Activated naive CD4-positive, alpha-beta T cell treated with anti-CD3 and anti-CD28 coated beads for 36 hours (primary cell): ENCODE measurements at regions of chr14 and their contacts with region 1.

Region 1: DNA sequence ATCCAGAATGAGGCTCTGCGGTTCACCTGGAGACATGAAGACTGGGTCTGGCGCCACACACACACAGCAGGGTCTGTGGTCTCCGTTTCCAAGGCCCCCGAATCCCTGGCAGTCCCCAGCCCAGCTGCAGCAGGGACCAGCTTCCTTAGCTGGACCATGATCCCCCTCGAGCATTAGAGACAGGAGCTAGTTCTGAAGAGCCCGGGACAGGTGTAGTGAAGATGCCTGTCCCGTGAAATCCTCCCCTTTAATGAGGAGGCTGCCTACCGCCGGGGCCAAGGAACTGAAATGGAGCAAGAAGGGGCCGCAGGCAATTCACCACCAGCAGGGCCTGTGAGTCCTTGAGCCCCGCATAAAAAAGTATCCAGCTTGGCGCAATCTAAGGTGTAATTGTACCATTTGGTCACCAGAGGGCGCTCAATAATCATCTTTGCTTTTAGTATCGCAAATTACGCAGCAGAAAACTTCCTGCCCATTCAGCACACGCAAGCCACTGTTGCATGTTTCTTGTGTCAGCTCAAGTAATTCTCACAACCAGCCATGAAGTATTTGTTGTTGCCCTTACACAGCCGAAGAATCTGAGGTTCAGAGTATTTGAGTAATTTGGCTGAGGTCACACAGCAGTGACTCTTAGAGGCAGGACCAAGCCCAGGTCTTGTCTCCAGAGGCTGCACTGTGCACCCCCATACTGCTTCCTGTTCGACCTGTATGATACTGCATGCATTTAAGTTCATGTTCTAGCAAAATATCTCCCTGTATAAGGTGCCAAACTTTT is 54.3 kb upstream of the PPP2R5C start:
- DNase-seq: peak; percentile 76
- H3K4me3 Mint-ChIP-seq: peak overlapping the region; percentile 49
- H3K27ac Mint-ChIP-seq: peak overlapping the region; percentile 78
- H3K4me1 Mint-ChIP-seq: peaks cover 27% of the 10 kb centered on the region
- H3K27me3 Mint-ChIP-seq: no peaks in the 10 kb centered on the region

Region 2: GRCh38 chr14:101371799-101372793 is 335.2 kb before region 1 on chr14:
- CTCF ChIA-PET with region 1: no interaction called
- intact Hi-C with region 1: no loop called
- DNase-seq: no peak
- H3K4me3 Mint-ChIP-seq: no peak overlapping the region
- H3K27ac Mint-ChIP-seq: no peak overlapping the region
- H3K4me1 Mint-ChIP-seq: no peaks in the 10 kb centered on the region
- H3K27me3 Mint-ChIP-seq: peaks cover 21% of the 10 kb centered on the region

Region 3: DNA sequence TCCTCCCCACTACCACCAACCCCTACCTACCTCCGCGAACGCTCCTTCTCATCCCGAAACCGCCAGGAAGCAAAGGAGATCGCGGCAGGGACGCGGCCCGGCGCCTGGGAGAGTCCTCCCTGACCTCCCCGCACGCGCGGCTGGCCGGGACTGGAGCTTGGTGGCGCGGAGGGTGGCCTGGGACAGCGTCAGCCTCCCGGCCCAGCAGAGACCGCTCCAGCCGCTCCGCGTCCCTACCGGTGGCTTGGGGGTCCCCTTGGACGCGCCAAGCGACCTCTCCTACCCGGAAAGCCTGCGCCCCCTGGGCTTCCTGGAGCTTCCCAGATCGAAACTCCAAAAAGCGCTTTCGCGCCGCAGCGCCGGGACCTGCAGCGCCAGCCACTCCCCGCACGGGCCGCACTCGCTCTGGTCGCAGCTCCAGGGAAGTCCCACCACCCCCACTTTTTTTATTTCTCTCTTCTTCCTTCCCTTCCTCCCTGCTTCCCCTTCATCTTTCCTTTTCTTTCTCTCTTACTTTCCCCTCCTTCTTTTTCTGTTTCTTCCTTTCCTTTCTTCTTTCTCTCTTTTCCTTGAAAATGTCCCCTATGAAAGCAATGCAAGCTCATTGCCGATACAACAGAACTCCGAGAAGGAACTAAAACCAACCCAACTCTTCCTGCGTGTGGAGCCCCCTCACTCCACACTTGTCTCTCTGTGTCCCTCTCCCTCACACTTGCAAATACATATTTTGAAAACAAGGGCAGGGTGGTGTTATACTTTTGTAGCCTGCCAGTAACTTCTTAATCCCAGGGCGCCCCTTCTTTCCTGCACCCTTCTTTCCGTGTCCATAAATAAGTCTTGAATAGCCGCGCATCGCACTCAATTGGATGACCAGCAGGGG is 142.2 kb before region 1 on chr14:
- CTCF ChIA-PET with region 1: no interaction called
- intact Hi-C with region 1: no loop called
- DNase-seq: no peak
- H3K4me3 Mint-ChIP-seq: no peak overlapping the region
- H3K27ac Mint-ChIP-seq: no peak overlapping the region
- H3K4me1 Mint-ChIP-seq: peaks cover 12% of the 10 kb centered on the region
- H3K27me3 Mint-ChIP-seq: peaks cover 61% of the 10 kb centered on the region

Region 4: DNA sequence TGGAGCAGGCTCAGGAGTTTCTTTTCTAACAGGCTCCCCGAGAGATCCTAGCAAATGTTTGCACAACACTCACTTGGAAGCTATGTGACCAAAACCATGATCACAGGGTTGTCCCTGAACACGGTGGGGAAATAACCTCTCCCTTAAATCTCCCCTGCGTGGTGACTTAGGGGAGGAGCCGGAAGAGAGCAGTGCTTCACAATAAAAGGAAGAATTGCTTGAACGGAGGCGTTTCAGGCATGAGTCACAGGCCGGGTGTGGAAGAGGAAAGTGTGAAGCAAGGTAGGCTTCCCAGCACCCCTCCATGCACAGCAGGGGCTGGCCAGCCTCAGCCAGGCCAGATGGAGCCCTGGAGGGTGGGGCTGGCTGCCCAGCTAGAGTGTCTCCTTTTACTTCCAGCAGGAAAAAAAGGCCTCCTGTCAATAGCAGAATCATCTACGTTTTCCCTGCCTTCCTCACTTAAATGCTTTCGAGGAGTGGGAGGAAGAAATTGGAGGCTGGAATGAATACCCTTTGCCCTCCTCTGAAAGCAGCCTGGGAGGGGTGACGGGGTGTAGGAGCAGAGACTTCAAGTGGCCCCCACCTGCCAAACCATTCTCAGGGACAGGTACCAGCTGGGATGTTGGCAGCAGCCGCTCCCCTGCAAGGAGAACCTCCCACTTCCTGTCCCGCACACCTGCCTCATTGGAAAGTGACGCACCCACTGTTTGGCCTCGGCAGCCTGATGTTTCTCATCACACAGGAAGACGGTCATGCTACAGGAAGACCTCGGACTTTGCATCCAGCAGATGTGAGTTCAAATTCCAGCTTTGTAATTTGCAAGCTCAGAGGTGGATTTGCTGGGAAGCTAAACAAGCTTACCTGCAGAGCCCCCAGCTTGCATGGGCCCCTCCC is 24.2 kb after region 1 on chr14:
- CTCF ChIA-PET with region 1: interaction called, 25 read pairs
- intact Hi-C with region 1: loop called (anchors 1 kb)
- DNase-seq: peak; percentile 96
- H3K4me3 Mint-ChIP-seq: peak overlapping the region; percentile 71
- H3K27ac Mint-ChIP-seq: peak overlapping the region; percentile 98
- H3K4me1 Mint-ChIP-seq: peaks cover 53% of the 10 kb centered on the region
- H3K27me3 Mint-ChIP-seq: no peaks in the 10 kb centered on the region

Region 5: GRCh38 chr14:101743701-101744100 is 36.4 kb after region 1 on chr14:
- CTCF ChIA-PET with region 1: no interaction called
- intact Hi-C with region 1: no loop called
- DNase-seq: no peak
- H3K4me3 Mint-ChIP-seq: no peak overlapping the region
- H3K27ac Mint-ChIP-seq: no peak overlapping the region
- H3K4me1 Mint-ChIP-seq: no peaks in the 10 kb centered on the region
- H3K27me3 Mint-ChIP-seq: no peaks in the 10 kb centered on the region

Region 6: GRCh38 chr14:101809671-101810514 is 102.6 kb after region 1 on chr14:
- CTCF ChIA-PET with region 1: interaction called, 8 read pairs
- intact Hi-C with region 1: loop called (anchors 1 kb)
- DNase-seq: peak; percentile 94
- H3K4me3 Mint-ChIP-seq: peak overlapping the region; percentile 83
- H3K27ac Mint-ChIP-seq: peak overlapping the region; percentile 95
- H3K4me1 Mint-ChIP-seq: peaks cover 42% of the 10 kb centered on the region
- H3K27me3 Mint-ChIP-seq: no peaks in the 10 kb centered on the region

Region 7: GRCh38 chr14:101876555-101876938 is 169.3 kb after region 1 on chr14:
- CTCF ChIA-PET with region 1: interaction called, 5 read pairs
- intact Hi-C with region 1: loop called (anchors 1 kb)
- DNase-seq: peak; percentile 94
- H3K4me3 Mint-ChIP-seq: peak overlapping the region; percentile 52
- H3K27ac Mint-ChIP-seq: peak overlapping the region; percentile 85
- H3K4me1 Mint-ChIP-seq: peaks cover 89% of the 10 kb centered on the region
- H3K27me3 Mint-ChIP-seq: no peaks in the 10 kb centered on the region

Region 8: DNA sequence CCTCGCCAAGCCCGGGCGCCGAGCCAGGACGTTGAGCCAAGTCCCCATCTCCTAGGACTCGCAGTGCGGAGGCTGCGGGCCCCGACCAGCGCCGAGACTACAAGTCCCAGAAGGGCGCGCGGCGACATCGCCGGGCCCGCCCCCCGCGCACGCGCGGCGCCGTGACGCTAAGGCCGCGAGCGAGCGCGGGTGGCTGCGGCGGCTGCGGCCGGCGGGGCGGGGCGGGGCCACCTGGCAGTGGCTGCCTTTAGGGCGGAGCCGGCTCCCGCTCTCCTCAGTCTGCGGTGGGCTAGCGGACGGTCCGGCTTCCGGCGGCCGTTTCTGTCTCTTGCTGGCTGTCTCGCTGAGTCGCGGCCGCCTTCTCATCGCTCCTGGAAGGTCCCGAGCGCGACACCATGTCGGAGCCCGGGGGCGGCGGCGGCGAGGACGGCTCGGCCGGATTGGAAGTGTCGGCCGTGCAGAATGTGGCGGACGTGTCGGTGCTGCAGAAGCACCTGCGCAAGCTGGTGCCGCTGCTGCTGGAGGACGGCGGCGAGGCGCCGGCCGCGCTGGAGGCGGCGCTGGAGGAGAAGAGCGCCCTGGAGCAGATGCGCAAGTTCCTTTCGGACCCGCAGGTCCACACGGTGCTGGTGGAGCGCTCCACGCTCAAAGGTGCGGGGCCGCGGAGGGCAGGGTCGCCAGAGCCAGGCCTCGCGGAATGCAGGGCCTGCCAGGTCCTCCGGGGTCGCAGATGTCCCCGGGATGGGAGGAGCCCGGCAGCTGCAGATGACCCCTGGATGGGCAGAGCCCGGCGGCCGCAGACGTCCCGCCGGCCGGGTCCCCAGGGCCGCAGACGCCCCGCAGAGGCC is 257.3 kb after region 1 on chr14 and contains the start of gene DYNC1H1:
- CTCF ChIA-PET with region 1: interaction called, 7 read pairs
- intact Hi-C with region 1: loop called (anchors 1 kb)
- DNase-seq: peak; percentile 86
- H3K4me3 Mint-ChIP-seq: peak within 1 kb of the TSS; percentile 89
- H3K27ac Mint-ChIP-seq: peak within 1 kb of the TSS; percentile 71
- H3K4me1 Mint-ChIP-seq: peaks cover 39% of the 10 kb centered on the region
- H3K27me3 Mint-ChIP-seq: no peaks in the 10 kb centered on the region
- total RNA-seq, gene DYNC1H1: 207 to 208 TPM

Region 9: GRCh38 chr14:102086972-102087761 is 379.9 kb after region 1 on chr14 and contains the start of gene HSP90AA1:
- CTCF ChIA-PET with region 1: no interaction called
- intact Hi-C with region 1: loop called (anchors 2 kb)
- DNase-seq: peak; percentile 92
- H3K4me3 Mint-ChIP-seq: peak within 1 kb of the TSS; percentile 97
- H3K27ac Mint-ChIP-seq: peak within 1 kb of the TSS; percentile 95
- H3K4me1 Mint-ChIP-seq: peaks cover 49% of the 10 kb centered on the region
- H3K27me3 Mint-ChIP-seq: no peaks in the 10 kb centered on the region
- total RNA-seq, gene HSP90AA1: 1,286 to 1,366 TPM

Region 10: DNA sequence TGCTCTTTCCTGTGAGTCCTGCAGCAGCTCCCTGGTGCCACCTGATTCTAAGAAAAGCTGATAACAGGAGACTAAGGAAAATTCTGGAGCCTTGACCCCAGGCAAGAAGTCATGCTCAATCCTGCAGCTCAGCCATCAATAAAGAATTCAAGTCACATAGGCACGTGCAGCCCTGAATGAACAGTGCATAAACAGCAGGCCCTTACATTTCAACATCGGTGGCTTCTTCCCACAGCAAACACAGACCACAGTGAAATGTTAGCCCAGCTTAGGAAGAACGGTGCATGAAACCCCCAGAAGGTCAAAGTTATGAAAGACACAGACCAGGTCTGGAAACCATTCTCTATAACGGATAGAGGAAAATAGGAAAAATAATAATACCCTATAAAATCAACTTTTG is 645.0 kb after region 1 on chr14:
- CTCF ChIA-PET with region 1: no interaction called
- intact Hi-C with region 1: no loop called
- DNase-seq: no peak
- H3K4me3 Mint-ChIP-seq: no peak overlapping the region
- H3K27ac Mint-ChIP-seq: no peak overlapping the region
- H3K4me1 Mint-ChIP-seq: peaks cover 2% of the 10 kb centered on the region
- H3K27me3 Mint-ChIP-seq: no peaks in the 10 kb centered on the region